WTC11 (cell line): ENCODE measurements at regions of chr1 and their contacts with region 1.

Region 1: GRCh38 chr1:3618881-3619671 is 5.7 kb upstream of the TPRG1L start:
- DNase-seq: peak; percentile 78
- ATAC-seq: peak; percentile 81
- H3K4me3 Mint-ChIP-seq: no peak overlapping the region
- H3K27ac Mint-ChIP-seq: no peak overlapping the region
- H3K4me1 Mint-ChIP-seq: peaks cover 24% of the 10 kb centered on the region
- H3K27me3 Mint-ChIP-seq: peaks cover 8% of the 10 kb centered on the region
- CTCF ChIP-seq: peak; percentile 77

Region 2: DNA sequence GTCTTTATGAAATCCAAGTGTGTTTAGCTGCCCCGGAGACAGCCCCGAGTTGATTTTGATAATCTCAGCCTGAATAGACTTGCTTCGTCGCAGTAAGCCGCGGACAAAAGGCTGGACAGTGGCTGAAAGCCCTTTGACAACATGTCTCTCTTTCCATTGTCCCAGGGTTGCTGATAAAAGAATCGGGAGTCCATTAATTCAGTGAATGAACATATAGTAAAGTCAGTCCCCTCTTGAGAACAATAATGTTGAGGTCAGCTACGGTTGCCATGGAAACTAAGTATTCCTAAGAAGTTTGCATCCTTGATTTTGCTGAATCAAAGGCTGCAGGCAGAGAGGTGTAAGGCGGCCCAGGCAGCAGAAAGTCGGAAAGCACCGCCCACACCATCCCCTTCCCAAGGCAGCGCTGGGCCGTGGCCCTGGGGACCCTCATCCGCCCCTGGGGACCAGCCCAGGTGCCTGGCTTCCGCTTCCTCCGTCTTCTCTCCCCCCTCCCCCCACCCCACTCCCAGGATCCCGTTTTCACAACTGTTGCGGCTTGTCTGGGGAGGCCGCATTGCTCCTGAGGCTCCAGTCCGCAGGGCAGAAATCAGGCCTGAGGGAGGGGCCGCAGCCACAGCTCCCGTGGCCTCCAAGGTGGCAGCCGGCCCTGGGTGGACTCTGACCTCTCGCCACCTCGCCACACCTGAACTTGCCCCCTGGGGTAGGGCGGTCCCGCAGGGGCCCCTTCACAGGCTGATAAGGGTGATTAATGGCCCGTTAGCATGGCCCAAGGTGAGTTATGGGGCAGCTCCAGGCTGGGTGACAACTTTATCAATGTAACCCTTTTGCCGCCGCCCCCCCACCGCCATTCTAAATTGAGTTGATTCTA is 369.2 kb before region 1 on chr1:
- CTCF ChIA-PET with region 1: no interaction called
- POLR2A ChIA-PET with region 1: no interaction called
- DNase-seq: no peak
- ATAC-seq: no peak
- H3K4me3 Mint-ChIP-seq: no peak overlapping the region
- H3K27ac Mint-ChIP-seq: no peak overlapping the region
- H3K4me1 Mint-ChIP-seq: peaks cover 15% of the 10 kb centered on the region
- H3K27me3 Mint-ChIP-seq: peaks cover 20% of the 10 kb centered on the region
- CTCF ChIP-seq: no peak

Region 3: GRCh38 chr1:3518256-3518655 is 100.8 kb before region 1 on chr1:
- CTCF ChIA-PET with region 1: interaction called, 34 read pairs
- POLR2A ChIA-PET with region 1: no interaction called
- DNase-seq: peak; percentile 67
- ATAC-seq: peak; percentile 36; the same call in 1 of the 2 replicates
- H3K4me3 Mint-ChIP-seq: no peak overlapping the region
- H3K27ac Mint-ChIP-seq: no peak overlapping the region
- H3K4me1 Mint-ChIP-seq: no peaks in the 10 kb centered on the region
- H3K27me3 Mint-ChIP-seq: no peaks in the 10 kb centered on the region
- CTCF ChIP-seq: peak; percentile 95

Region 4: DNA sequence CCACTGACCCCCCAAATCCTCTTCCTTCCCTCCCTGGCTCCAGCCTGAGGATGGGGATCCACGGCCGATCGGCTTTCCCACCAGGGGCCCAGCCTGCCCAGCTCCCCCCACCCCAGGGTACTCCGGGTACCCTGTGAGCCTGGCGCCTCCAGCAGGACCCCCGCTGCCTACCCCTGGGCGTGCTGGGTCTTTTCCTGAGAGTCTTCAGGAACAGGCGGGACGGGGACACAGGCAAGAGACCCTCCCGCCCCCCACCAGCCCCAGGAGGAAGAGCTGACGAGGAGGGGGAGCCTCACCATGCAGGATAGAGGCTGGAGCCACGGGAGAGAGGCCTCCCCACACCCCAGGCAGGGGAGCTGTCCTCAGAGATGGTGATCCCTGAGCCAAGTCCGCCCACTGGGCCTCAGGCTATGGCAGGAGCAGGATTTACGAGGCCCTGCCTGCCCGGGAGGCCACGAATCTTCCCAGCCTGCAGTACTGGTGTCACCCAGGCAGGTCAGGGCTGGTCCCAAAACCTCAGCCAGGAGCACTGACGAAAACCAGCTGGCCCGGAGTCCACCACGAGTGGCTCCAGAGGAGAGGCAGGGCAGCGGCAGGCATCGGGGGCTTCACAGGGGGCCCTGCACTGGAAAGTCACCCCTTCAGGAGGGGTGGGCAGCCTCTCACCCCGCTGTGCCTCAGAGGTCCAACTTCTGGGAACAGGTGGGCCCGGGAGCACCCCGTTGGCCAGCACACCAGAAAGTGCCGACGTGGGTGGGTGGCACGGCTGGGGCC is 65.7 kb before region 1 on chr1:
- CTCF ChIA-PET with region 1: interaction called, 14 read pairs
- POLR2A ChIA-PET with region 1: no interaction called
- DNase-seq: no peak
- ATAC-seq: no peak
- H3K4me3 Mint-ChIP-seq: no peak overlapping the region
- H3K27ac Mint-ChIP-seq: no peak overlapping the region
- H3K4me1 Mint-ChIP-seq: no peaks in the 10 kb centered on the region
- H3K27me3 Mint-ChIP-seq: no peaks in the 10 kb centered on the region; the same call in 1 of the 2 replicates
- CTCF ChIP-seq: no peak

Region 5: DNA sequence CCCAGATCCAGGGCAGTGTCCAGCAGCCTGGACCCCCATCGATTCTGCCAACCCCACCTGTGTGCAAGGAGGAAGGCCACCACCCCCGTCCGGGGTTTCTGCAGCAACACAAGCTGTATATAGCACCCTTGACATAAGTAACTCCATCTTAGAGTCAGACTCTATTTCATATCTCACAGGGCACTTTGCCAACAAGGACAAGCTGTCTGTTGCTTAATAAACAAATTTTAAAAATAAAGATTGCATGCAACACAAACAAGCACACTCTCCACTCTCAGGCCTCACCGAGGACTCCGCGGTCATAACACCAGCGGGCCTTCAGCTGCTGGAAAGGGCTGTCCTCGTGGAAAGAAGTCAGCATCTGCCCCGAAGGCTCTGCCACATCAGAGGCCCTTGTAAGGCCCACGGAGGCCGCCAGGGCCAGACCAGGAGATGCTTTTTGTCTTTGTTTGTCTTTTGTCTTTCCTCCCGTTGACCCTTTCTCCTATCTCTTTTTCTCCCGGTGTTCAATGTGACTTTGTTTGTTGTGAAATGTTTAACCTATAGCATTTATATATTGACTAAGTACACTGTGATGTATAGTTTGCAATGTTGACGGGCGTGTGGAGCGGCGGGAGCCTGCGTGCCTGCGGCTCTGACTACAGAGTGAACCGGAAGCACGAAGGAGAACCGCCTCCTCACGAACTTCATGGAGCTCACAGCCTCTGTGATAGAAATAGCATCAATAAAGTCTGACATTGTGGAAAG is 32.0 kb before region 1 on chr1:
- CTCF ChIA-PET with region 1: interaction called, 65 read pairs
- POLR2A ChIA-PET with region 1: no interaction called
- DNase-seq: no peak
- ATAC-seq: no peak
- H3K4me3 Mint-ChIP-seq: no peak overlapping the region
- H3K27ac Mint-ChIP-seq: peak overlapping the region; percentile 65
- H3K4me1 Mint-ChIP-seq: 0 out of 2 replicates have a peak, but pooled peaks cover 2% of the 10 kb centered on the region
- H3K27me3 Mint-ChIP-seq: no peaks in the 10 kb centered on the region
- CTCF ChIP-seq: no peak

Region 6: DNA sequence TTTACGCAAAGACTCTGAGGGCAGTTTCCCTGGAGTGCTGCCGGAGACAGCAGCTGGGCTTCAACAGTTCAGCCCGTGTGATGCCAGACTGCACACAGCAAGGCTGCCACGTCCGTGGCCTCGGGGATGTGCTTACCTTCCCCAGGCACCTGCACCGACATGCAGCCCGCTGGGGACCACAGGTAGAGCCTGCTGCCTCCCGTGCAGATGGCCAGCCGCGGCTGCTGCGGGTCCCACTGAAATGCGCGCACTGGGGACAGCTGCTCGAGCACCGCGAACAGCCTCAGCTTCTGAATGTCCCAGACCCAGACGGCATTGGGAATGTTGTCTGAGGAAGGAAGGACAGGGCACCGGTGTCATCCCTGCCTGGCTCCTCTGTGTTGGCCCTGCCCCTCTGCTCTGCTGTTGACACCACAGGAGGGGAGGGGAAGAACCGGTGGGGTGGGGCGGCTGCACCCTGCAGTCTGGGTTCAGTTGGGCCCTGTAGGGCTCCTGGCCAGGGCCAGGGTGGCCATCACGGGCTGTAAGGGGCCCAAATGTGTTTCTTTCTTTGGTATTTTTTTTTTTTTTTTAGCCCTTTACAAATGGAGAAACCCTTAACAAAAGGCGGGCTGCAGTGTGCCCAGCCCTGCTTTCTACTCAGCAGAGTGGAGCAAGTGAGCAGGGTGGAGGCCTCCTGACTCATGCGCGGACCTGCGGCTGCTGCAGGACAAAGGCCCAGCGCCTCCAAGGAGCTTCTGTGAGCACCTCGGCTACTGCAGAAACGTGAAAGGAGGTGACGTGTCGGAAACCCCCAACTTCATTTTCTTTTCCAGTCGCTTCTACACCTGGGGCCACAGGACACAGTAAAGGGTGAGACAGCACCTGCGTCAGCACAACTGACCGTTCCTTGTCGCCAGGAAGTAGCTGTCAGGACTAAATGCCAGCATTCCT is 12.5 kb after region 1 on chr1:
- CTCF ChIA-PET with region 1: interaction called, 24 read pairs
- POLR2A ChIA-PET with region 1: no interaction called
- DNase-seq: peak; percentile 12
- ATAC-seq: peak; percentile 58
- H3K4me3 Mint-ChIP-seq: no peak overlapping the region
- H3K27ac Mint-ChIP-seq: 0 out of 2 replicates have a peak overlapping the region, but pooled peaks have one; percentile 27
- H3K4me1 Mint-ChIP-seq: no peaks in the 10 kb centered on the region
- H3K27me3 Mint-ChIP-seq: no peaks in the 10 kb centered on the region
- CTCF ChIP-seq: no peak